Esophagus squamous epithelium (tissue), 5 donors: ENCODE measurements at regions of chr11 and their contacts with region 1.

Region 1: GRCh38 chr11:129750349-129751292 is 65.0 kb upstream of the TMEM45B start:
- DNase-seq: no peak
- H3K4me3 ChIP-seq: peak overlapping the region in 3 of 4 donors; percentile 28 to 51 (median 34)
- H3K27ac ChIP-seq: peak overlapping the region in 3 of 4 donors; percentile 56 to 76 (median 72)
- H3K4me1 ChIP-seq: peaks cover 5 to 19% (median 6%) of the 10 kb centered on the region in 3 donors
- H3K27me3 ChIP-seq: no peaks in the 10 kb centered on the region
- CTCF ChIP-seq: peak; percentile 94 to 100 (median 100)
- POLR2A ChIP-seq: no peak

Region 2: DNA sequence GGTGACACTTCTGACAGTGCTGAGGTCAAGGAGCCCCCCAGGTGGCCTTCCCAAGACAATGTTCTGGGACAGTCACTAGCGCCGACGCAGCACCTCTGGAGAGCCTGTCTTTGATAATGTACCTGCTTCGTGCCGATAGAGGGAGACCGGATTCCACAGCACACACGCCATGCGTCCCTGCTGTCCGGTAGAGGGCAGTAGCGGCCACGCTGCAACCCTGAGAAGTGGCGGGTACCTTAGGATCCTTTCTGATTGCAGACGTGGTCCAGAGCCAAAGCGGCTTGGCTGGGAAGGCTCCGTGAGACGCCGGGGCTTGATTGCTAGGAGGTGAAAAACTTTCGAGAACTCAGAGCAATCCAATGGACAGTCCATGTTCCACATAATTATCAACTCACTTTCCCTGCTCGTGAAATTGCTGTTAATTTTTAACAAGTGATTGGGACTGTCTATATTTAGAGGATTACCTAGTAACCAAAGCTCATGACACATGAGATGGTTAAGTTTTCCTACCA is 386.4 kb before region 1 on chr11:
- intact Hi-C with region 1: loop called (anchors 5 kb)
- DNase-seq: no peak
- H3K4me3 ChIP-seq: no peak overlapping the region
- H3K27ac ChIP-seq: peak overlapping the region in 1 of 4 donors; percentile 44
- H3K4me1 ChIP-seq: peaks cover 0 to 46% (median 10%) of the 10 kb centered on the region in 3 donors
- H3K27me3 ChIP-seq: peaks cover 0 to 44% (median 0%) of the 10 kb centered on the region in 4 donors
- CTCF ChIP-seq: peak; percentile 85 to 100 (median 98)
- POLR2A ChIP-seq: no peak

Region 3: GRCh38 chr11:130037058-130037457 is 286.4 kb after region 1 on chr11:
- intact Hi-C with region 1: no loop called
- DNase-seq: no peak
- H3K4me3 ChIP-seq: no peak overlapping the region
- H3K27ac ChIP-seq: peak overlapping the region in 3 of 4 donors; percentile 58 to 62 (median 58)
- H3K4me1 ChIP-seq: peaks cover 0 to 13% (median 2%) of the 10 kb centered on the region in 3 donors
- H3K27me3 ChIP-seq: no peaks in the 10 kb centered on the region
- CTCF ChIP-seq: no peak
- POLR2A ChIP-seq: no peak